ENCODE measurements at regions of chr7 and their contacts with region 1.

Region 1: DNA sequence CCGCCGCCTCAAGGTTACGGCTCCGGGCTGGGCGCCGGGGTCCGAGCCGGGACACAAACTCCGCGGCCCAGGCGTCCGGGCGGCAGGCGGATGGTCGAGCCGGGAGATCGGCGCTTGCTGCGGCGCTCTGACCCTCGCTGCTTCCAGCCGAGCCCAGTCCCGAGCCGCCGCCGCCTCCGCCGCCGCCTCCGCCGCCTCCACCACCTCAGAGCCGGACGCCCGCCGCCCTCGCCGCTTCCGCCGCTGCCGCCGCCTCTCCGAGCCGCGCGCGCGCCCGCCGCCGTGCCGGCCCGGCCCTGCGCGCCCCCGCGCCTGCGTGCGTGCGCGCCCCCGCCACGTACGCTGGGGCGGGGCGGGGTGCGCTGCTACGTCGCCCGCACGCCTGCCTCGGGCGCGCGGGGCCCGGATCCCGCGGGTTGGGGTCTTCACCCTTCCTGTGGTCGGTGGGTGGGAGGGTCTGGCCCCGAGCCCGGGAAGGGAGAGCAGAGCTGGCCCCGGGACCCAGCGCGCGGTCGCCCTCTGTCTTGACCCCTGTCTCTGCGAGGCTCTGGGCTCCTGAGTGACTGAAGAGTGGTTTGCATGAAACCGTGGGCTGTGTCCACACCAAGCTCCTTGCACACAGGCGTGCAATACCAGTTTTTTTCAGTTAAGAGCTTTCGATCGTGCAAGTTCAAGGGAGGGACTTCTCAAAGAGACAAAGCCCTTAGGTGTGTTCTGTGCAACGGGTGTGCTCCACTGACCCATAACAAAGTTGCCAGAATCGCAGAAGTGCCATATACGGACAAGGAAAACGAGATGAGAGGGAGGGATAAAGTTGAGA is at the start of gene SMURF1:
- DNase-seq: peak; percentile 45 to 82 (median 76)
- ATAC-seq: peak; percentile 51 to 54
- H3K4me3 Mint-ChIP-seq: peak within 1 kb of the TSS; percentile 90 to 98 (median 95)
- H3K27ac Mint-ChIP-seq: peak within 1 kb of the TSS; percentile 83 to 99 (median 96)
- H3K4me1 Mint-ChIP-seq: peaks cover 22 to 45% (median 38%) of the 10 kb centered on the region in 4 donors
- H3K27me3 Mint-ChIP-seq: peaks cover 0 to 2% (median 0%) of the 10 kb centered on the region in 5 donors
- polyA plus RNA-seq, gene SMURF1: 0.95 to 3.2 (median 2.0) TPM

Region 2: DNA sequence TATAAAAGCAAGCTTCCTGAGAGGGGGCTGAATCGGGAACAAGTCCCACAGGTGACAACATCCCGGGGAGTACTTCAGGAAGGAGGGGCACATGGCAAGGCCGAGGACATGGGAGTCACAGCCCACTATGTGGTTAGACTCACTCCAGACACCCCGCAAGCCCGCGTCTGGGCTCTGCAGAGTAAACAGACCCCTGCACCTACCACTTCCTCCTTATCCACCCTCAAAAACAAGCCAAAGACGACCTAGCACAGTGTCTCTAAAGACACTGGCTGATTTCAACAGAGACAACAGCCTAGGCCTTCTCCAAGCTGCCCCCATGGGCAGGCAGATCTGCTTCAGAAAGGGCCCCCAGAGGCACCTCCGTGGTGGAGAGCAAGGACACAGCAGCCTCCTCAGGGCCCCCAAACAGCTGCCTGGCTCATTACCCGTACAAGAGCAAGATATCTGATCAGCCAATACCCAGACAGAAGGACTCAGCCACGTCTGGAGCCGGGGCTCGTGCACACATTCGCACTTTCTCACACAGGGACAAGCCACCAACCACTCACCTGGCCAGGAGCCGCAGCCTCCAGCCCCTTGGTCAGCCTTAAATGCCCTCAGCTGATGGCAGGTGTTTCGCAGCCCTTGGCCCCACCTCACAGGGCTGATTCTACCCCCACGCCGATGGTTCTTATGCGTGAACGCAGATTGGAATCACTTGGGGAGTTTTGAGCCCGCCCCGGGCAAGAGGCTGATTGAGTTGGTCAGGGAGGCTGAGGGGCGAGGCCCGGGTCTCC is 74.5 kb after region 1 on chr7:
- POLR2A ChIA-PET with region 1: interaction called, 14 read pairs
- DNase-seq: peak in 6 of 10 donors; percentile 11 to 50 (median 34)
- ATAC-seq: peak; percentile 91 to 96
- H3K4me3 Mint-ChIP-seq: peak overlapping the region; percentile 32 to 82 (median 66)
- H3K27ac Mint-ChIP-seq: peak overlapping the region; percentile 93 to 99 (median 97)
- H3K4me1 Mint-ChIP-seq: peaks cover 12 to 33% (median 26%) of the 10 kb centered on the region in 4 donors
- H3K27me3 Mint-ChIP-seq: no peaks in the 10 kb centered on the region

Region 3: DNA sequence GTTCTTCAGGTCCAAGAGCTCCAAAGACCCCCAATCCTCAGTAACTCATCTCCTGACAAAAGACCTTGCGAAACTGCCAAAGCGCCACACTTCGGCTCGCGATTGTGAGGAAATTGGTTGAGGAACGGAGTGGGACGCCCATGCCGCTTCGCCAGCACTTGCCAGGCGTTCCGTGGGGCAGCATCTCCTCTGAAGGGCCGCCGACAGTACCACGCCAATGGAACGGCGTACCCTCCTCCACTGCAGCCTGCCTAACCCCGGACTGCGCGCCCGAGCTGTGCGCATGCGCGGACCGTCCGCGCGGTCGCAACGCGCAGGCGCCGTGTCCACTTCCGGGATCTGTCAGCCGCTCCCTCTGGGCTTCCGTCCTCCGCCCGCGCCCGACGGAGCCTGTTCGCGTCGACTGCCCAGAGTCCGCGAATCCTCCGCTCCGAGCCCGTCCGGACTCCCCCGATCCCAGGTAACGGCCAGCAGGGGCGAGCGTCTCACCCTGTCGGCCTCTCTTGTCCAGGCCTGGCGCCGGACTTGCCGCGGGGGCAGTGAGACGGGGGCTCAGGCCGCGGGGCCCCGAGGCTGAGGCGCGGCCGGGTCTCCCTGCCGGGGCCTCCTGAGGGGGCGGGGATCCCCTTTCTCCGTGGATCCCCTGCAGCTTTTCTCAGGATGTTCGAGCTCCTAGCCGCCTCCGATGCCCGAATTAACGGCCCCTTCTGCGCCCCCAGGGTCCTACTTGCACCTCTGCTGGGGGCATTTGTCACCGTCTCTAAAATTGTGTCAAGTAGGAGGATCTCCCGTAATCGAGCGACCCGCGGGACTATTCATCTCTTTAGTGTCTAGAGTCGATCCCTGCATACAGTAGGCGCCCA is 181.7 kb after region 1 on chr7 and contains the start of gene ARPC1A:
- POLR2A ChIA-PET with region 1: interaction called, 10 read pairs
- DNase-seq: peak; percentile 85 to 94 (median 92)
- ATAC-seq: peak; percentile 92 to 94
- H3K4me3 Mint-ChIP-seq: peak within 1 kb of the TSS; percentile 87 to 97 (median 92)
- H3K27ac Mint-ChIP-seq: peak within 1 kb of the TSS; percentile 84 to 97 (median 94)
- H3K4me1 Mint-ChIP-seq: peaks cover 20 to 46% (median 44%) of the 10 kb centered on the region in 4 donors
- H3K27me3 Mint-ChIP-seq: peaks cover 0 to 3% (median 0%) of the 10 kb centered on the region in 5 donors
- polyA plus RNA-seq, gene ARPC1A: 42.7 to 74.8 (median 63.6) TPM

Measured in naive thymus-derived CD8-positive, alpha-beta T cell (primary cell).